ENCODE measurements at regions of chr4 and their contacts with region 1.

Region 1: GRCh38 chr4:169305651-169306050 is 34.9 kb upstream of the SH3RF1 start:
- DNase-seq: no peak
- H3K4me3 ChIP-seq: no peak overlapping the region
- H3K27ac ChIP-seq: no peak overlapping the region
- H3K4me1 ChIP-seq: no peaks in the 10 kb centered on the region
- H3K27me3 ChIP-seq: no peaks in the 10 kb centered on the region
- CTCF ChIP-seq: no peak
- POLR2A ChIP-seq: no peak

Region 2: GRCh38 chr4:169024762-169025161 is 280.9 kb before region 1 on chr4:
- intact Hi-C with region 1: loop called in 1 of 2 experiments (anchors 10 kb)
- DNase-seq: peak in 1 of 7 donors; percentile 12
- H3K4me3 ChIP-seq: no peak overlapping the region
- H3K27ac ChIP-seq: no peak overlapping the region
- H3K4me1 ChIP-seq: no peaks in the 10 kb centered on the region
- H3K27me3 ChIP-seq: no peaks in the 10 kb centered on the region
- CTCF ChIP-seq: peak; percentile 30 to 70 (median 64)
- POLR2A ChIP-seq: no peak

Region 3: GRCh38 chr4:169410839-169411770 is 105.5 kb after region 1 on chr4:
- intact Hi-C with region 1: no loop called
- DNase-seq: peak; percentile 20 to 70 (median 30)
- H3K4me3 ChIP-seq: no peak overlapping the region
- H3K27ac ChIP-seq: no peak overlapping the region
- H3K4me1 ChIP-seq: peaks cover 0 to 8% of the 10 kb centered on the region in 2 donors
- H3K27me3 ChIP-seq: no peaks in the 10 kb centered on the region
- CTCF ChIP-seq: no peak
- POLR2A ChIP-seq: no peak